Breast epithelium (tissue), 4 donors: ENCODE measurements at regions of chr17 and their contacts with region 1.

Region 1: DNA sequence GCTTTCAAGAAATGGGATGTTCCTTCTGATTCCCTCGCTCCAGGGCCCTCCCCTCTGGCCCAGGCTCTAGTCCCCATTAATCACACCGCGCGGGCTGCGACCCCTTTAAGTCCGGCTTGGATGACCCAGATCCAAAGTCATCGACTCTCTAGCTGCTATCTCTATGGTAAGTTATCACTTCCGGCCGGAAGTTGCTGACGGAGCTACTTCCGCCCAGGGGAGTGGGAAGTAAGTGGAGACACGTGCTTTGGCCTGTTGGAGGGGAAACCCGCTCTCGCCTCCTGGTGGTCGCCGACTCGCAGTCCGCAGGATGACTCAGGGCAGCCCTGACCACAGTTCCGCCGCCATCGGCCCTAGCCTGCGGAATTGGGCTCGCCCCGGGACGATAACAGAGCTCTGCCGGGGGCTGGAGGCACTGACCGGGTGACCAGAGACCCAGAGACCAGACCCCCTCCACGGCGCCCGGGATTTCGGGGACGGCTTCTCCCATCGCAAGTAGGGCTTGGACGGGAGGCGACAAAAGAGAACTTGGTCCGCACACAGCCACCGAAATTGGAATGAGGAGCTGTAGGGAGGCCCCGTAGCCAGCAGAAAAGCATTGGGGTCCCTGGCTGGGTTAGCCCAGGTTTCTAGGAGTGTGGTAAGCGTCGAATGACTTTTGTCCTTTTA is 52.2 kb upstream of the SEC14L1 start:
- DNase-seq: peak; percentile 77 to 89
- H3K4me3 ChIP-seq: peak overlapping the region; percentile 70 to 79 (median 72)
- H3K27ac ChIP-seq: peak overlapping the region; percentile 83 to 86
- H3K4me1 ChIP-seq: peaks cover 0 to 3% of the 10 kb centered on the region in 2 donors
- H3K27me3 ChIP-seq: no peaks in the 10 kb centered on the region
- CTCF ChIP-seq: peak; percentile 58 to 67 (median 62)
- POLR2A ChIP-seq: no peak

Region 2: GRCh38 chr17:77061669-77062068 is 26.9 kb before region 1 on chr17:
- intact Hi-C with region 1: no loop called
- DNase-seq: no peak
- H3K4me3 ChIP-seq: no peak overlapping the region
- H3K27ac ChIP-seq: no peak overlapping the region
- H3K4me1 ChIP-seq: no peaks in the 10 kb centered on the region
- H3K27me3 ChIP-seq: peaks cover 0 to 16% of the 10 kb centered on the region in 2 donors
- CTCF ChIP-seq: no peak
- POLR2A ChIP-seq: no peak

Region 3: GRCh38 chr17:77186141-77186604 is 97.6 kb after region 1 on chr17:
- intact Hi-C with region 1: no loop called
- DNase-seq: no peak
- H3K4me3 ChIP-seq: no peak overlapping the region
- H3K27ac ChIP-seq: peak overlapping the region in 1 of 2 donors; percentile 1
- H3K4me1 ChIP-seq: peaks cover 0 to 6% of the 10 kb centered on the region in 2 donors
- H3K27me3 ChIP-seq: no peaks in the 10 kb centered on the region
- CTCF ChIP-seq: no peak
- POLR2A ChIP-seq: no peak

Region 4: DNA sequence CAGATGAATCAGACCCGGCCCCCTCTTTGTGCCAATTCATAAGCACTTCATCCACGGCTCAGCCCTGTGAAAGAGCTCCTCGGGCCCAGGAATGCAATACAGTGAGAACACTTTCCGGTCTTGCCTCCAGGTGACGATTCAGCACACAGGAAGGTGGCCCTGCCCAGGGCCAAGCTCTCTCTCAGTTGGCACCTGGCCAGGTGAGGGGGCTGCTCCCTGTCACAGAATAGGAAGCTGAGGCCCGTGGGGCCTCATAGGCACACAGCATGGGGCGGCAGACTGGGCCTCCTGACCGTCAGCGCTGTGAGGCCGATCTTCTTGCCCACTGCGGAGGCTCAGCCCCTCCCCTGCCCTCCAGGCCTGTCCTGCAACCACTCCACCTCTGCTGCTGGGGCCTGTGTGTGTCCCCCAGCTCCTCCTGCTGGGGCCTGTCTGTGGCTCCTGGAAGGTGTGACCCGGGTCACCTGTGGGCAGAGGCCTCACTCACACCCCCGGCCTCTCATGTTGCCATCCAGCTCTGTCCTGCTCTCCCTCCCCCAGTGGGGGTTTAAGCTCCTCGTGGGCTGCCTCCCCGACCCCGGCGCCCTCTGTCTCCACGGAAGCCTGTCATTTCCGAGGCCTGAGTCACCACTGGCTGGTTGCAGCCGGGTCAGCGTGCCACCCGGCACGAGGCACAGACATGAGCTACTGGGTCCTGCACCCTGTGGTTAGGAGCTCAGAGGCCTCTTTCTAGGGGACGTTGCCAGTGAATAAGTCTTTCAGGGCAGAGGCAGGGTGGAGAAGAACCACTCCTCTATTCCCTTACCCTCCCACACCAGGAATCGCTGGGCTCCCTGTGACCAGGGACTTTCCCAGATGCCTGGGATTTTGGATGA is 166.6 kb after region 1 on chr17:
- intact Hi-C with region 1: loop called (anchors 10 kb)
- DNase-seq: peak; percentile 58 to 69
- H3K4me3 ChIP-seq: peak overlapping the region in 1 of 3 donors; percentile 13
- H3K27ac ChIP-seq: peak overlapping the region; percentile 88 to 91
- H3K4me1 ChIP-seq: peaks cover 11 to 12% of the 10 kb centered on the region in 2 donors
- H3K27me3 ChIP-seq: no peaks in the 10 kb centered on the region
- CTCF ChIP-seq: peak in 1 of 3 donors; percentile 34
- POLR2A ChIP-seq: no peak

Region 5: GRCh38 chr17:78226749-78227399 is 1138.3 kb after region 1 on chr17:
- intact Hi-C with region 1: loop called (anchors 5 kb)
- DNase-seq: no peak
- H3K4me3 ChIP-seq: no peak overlapping the region
- H3K27ac ChIP-seq: no peak overlapping the region
- H3K4me1 ChIP-seq: no peaks in the 10 kb centered on the region
- H3K27me3 ChIP-seq: peaks cover 5 to 15% of the 10 kb centered on the region in 2 donors
- CTCF ChIP-seq: no peak
- POLR2A ChIP-seq: no peak